ENCODE measurements at regions of chr2 and their contacts with region 1.

Region 1: DNA sequence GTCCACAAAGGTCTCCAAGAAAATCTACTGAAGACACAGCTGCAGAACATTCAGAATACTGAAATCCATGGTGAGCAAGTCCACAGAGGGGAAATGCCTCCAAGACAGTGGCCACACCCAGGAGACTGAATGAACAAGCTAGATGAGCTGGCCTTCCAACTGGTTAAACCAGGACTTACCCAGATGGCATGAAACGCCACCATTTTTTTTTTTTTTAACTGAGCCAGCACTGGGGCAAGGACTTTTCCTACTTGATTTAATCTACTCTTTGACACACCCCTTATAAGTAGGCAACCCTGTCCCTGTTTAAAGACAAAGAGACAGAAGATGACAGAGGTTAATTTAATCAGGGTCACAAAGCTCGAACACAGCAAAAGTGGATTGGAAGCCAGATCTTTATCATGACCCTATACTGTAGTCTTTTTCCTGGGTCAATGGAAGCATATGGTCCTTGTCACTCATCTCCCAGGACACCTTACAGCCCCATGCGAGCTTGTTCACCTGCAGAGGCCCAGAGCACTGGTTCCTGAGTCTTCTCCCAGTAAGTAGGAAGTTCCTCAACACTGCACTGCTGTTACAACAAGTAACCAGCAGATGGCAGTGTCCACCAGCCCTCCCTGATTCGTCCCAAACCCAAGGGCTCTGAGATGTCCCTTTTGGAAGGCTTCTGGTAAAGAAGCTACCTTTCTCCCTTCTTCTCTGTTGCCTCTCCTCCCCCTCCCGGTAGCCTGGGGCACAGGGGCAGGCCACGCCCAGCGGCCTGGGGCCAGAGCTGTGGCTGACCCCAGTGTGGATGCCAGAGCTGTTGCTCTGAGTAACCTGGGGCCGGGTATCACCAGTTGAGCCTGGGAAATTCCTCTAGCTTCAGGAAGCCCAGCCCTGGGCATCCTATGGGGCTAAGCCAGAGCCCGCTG is 5.6 kb upstream of the GDF7 start:
- DNase-seq: peak in 4 of 5 donors; percentile 55 to 71 (median 65)
- ATAC-seq: peak; percentile 34 to 82 (median 78)
- H3K4me3 ChIP-seq: no peak overlapping the region
- H3K27ac ChIP-seq: no peak overlapping the region
- H3K4me1 ChIP-seq: peaks cover 0 to 14% (median 10%) of the 10 kb centered on the region in 12 donors
- H3K27me3 ChIP-seq: peaks cover 20 to 82% (median 50%) of the 10 kb centered on the region in 9 donors
- CTCF ChIP-seq: peak; percentile 90 to 99 (median 96)
- POLR2A ChIP-seq: no peak

Region 2: DNA sequence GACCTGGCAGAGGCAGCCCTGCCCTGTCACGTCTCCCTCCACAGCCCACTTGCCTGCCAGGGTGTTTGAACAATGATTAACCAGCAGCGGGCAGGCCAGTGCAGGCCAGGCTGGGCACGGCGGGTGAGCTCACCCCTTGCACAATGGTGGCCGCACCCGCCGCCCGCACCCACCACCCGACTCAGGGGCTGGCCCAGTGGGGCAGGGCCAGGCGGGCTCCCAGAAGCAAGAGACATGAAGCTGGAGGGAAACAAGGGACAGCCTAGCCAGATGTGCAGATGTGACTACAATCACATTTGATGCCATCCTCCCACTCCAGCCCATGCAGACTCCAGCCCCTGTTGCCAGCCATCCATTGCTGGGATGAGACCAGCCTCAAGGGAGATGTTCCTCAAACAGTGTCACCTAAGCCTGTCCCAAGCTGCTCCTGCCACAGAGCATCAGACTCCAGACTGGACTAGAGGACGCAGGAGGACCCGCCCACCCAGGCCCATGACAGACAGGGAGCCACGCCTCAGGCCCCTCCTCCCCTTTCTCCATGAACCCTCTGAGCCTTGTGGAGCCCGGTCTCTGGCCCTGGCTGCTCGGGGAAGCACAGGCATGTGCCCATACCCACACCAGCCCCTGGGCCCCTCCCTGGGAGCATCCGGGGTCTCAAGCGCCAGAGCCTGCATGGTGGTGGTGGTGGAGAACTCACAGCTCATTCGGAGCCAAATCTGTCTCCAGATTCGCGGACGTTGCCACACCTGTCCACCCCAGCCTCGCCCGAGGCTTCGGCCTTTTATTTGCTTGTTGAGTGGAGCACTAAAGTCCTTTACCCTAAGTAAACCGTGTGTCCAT is 481.3 kb before region 1 on chr2:
- intact Hi-C with region 1: loop called in 1 of 10 experiments (anchors 5 kb)
- DNase-seq: no peak
- ATAC-seq: peak in 2 of 4 donors; percentile 24 to 35
- H3K4me3 ChIP-seq: no peak overlapping the region
- H3K27ac ChIP-seq: no peak overlapping the region
- H3K4me1 ChIP-seq: peaks cover 0 to 3% (median 0%) of the 10 kb centered on the region in 12 donors
- H3K27me3 ChIP-seq: no peaks in the 10 kb centered on the region
- CTCF ChIP-seq: no peak
- POLR2A ChIP-seq: no peak

Region 3: GRCh38 chr2:20762945-20763683 is 101.8 kb after region 1 on chr2:
- intact Hi-C with region 1: loop called in 2 of 10 experiments (anchors 5 to 10 kb)
- DNase-seq: no peak
- ATAC-seq: no peak
- H3K4me3 ChIP-seq: no peak overlapping the region
- H3K27ac ChIP-seq: peak overlapping the region in 1 of 12 donors; percentile 57
- H3K4me1 ChIP-seq: peaks cover 0 to 9% (median 0%) of the 10 kb centered on the region in 12 donors
- H3K27me3 ChIP-seq: no peaks in the 10 kb centered on the region
- CTCF ChIP-seq: no peak
- POLR2A ChIP-seq: no peak

Region 4: GRCh38 chr2:20829861-20830260 is 168.5 kb after region 1 on chr2:
- intact Hi-C with region 1: loop called in 2 of 10 experiments (anchors 5 to 10 kb)
- DNase-seq: no peak
- ATAC-seq: no peak
- H3K4me3 ChIP-seq: no peak overlapping the region
- H3K27ac ChIP-seq: no peak overlapping the region
- H3K4me1 ChIP-seq: no peaks in the 10 kb centered on the region
- H3K27me3 ChIP-seq: peaks cover 0 to 15% (median 0%) of the 10 kb centered on the region in 9 donors
- CTCF ChIP-seq: no peak
- POLR2A ChIP-seq: no peak

Region 5: GRCh38 chr2:21042958-21043743 is 381.8 kb after region 1 on chr2:
- intact Hi-C with region 1: loop called in 1 of 10 experiments (anchors 5 kb)
- DNase-seq: peak; percentile 41 to 78 (median 65)
- ATAC-seq: peak; percentile 60 to 66 (median 62)
- H3K4me3 ChIP-seq: peak overlapping the region in 9 of 12 donors; percentile 10 to 46 (median 33)
- H3K27ac ChIP-seq: peak overlapping the region in 9 of 12 donors; percentile 19 to 84 (median 51)
- H3K4me1 ChIP-seq: peaks cover 0 to 21% (median 6%) of the 10 kb centered on the region in 12 donors
- H3K27me3 ChIP-seq: peaks cover 0 to 17% (median 0%) of the 10 kb centered on the region in 9 donors
- CTCF ChIP-seq: peak; percentile 97 to 100 (median 99)
- POLR2A ChIP-seq: no peak

Measured in heart left ventricle (tissue), 16 donors.